Breast epithelium (tissue), 4 donors: ENCODE measurements at regions of chr12 and their contacts with region 1.

Region 1: DNA sequence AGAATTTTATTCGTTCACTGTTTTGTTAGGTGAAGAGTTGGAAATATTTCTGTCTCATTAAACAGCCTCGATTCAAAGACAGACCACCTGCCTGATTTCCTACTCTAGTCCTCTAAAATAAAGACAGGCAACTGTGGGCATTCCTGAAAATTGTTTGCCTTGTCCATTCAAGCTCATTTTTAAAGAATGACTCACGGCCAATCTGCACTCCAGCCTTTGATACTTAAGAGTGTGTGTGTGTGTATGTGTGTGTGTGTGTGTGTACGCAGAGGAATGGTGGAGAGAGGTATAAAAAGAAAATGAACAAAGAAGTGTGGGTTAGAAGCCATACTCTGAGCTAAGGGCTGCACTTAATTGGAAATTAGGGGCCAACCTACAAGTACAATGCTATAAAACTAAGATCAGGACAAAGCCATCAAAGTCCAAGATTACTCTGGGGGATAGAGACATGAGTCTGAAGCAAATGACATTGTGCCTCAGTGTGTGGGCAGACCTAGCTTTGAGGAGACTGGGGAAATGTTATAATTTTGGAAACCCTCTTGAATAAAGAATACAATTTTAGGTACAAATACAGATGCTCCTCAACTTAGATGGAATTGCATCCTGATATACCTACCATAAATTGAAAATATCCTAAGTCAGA is 45.6 kb upstream of the SOCS2 start:
- DNase-seq: no peak
- H3K4me3 ChIP-seq: no peak overlapping the region
- H3K27ac ChIP-seq: no peak overlapping the region
- H3K4me1 ChIP-seq: no peaks in the 10 kb centered on the region
- H3K27me3 ChIP-seq: no peaks in the 10 kb centered on the region
- CTCF ChIP-seq: no peak
- POLR2A ChIP-seq: no peak

Region 2: DNA sequence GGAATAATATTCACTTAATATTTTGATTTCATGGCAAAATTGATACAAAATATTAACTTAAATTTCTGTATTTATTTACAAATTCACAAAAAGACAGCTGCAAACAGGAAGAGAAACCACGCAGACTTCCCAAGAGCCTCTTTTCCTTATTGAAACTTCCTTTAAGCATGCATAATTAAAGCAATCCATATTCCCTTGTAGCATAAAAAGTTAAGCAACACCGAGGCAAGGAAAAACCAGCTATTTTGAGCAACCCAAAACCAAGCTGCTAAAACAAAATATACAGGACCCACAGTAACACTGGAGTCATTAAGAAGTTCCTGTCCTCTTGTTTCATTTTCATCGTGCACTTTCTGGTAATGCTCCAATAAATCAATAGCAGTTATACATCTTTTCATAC is 655.8 kb before region 1 on chr12:
- intact Hi-C with region 1: no loop called
- DNase-seq: no peak
- H3K4me3 ChIP-seq: no peak overlapping the region
- H3K27ac ChIP-seq: no peak overlapping the region
- H3K4me1 ChIP-seq: no peaks in the 10 kb centered on the region
- H3K27me3 ChIP-seq: no peaks in the 10 kb centered on the region
- CTCF ChIP-seq: no peak
- POLR2A ChIP-seq: no peak

Region 3: DNA sequence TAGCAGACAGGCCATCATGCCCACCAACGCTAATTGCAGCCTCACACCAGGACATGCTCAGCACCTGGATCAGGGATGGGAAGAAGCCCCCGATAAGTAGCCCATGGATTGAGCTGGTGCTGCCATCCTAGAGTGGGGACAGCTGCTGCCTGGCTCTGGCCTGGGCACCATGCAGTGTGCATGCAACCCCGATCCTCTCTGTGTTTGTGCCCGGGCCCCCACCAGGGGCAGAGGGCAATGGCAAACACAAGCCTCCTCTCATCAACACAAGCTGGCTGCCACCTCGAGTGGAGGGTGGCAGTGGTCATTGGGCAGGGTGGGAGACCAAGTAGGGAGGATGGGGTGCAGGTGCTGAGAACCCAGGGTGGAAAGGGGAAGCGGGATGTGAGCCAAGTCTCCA is 22.3 kb after region 1 on chr12:
- intact Hi-C with region 1: loop called (anchors 2 kb)
- DNase-seq: no peak
- H3K4me3 ChIP-seq: no peak overlapping the region
- H3K27ac ChIP-seq: no peak overlapping the region
- H3K4me1 ChIP-seq: no peaks in the 10 kb centered on the region
- H3K27me3 ChIP-seq: no peaks in the 10 kb centered on the region
- CTCF ChIP-seq: no peak
- POLR2A ChIP-seq: no peak

Region 4: GRCh38 chr12:94271351-94271750 is 744.4 kb after region 1 on chr12:
- intact Hi-C with region 1: loop called (anchors 5 kb)
- DNase-seq: no peak
- H3K4me3 ChIP-seq: no peak overlapping the region
- H3K27ac ChIP-seq: no peak overlapping the region
- H3K4me1 ChIP-seq: peaks cover 0 to 4% of the 10 kb centered on the region in 2 donors
- H3K27me3 ChIP-seq: no peaks in the 10 kb centered on the region
- CTCF ChIP-seq: no peak
- POLR2A ChIP-seq: no peak